ENCODE measurements at regions of chr10 and their contacts with region 1.

Region 1: GRCh38 chr10:77641788-77642397 is 4.3 kb upstream of the KCNMA1 start:
- DNase-seq: no peak
- ATAC-seq: peak; percentile 65

Region 2: DNA sequence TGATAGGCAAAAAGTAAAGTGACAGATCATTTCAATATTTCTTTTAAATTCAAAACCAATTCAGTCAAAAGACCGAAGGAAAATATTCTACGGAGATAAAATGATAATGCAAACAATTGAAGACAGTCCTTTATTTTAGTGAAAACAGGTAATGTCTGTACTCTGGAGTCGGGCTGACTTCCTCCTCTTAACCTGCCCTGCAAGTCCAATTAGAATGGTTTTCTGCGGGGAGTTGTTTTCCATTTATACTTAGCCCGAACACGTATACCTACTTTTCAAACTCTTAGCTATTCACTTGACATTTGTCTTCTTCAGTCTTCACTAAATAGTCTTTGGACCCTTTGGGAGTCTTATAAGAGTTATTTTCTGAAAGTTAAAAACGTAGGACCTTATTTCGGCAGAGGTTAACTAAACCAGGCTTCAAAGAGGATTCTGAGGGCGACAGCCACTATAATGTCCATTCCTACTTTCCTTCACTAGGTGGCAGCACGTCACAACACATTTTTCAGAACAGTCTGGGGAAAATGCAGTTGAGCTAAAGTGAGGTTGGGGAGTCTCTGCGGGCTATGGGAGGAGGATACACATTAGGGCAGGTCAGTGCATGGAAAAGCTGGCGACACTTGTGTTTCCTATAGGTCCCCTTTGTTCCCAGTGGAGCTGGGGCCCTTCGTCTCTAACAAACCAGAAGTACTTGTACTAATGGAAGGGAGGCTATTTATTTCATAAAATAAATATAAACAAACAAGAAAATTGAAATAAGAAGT is 476.3 kb before region 1 on chr10:
- intact Hi-C with region 1: loop called (anchors 2 kb)
- DNase-seq: no peak
- ATAC-seq: peak; percentile 71

Region 3: GRCh38 chr10:77173615-77174461 is 468.1 kb before region 1 on chr10:
- intact Hi-C with region 1: loop called (anchors 2 kb)
- DNase-seq: peak; percentile 63
- ATAC-seq: peak; percentile 83

Region 4: DNA sequence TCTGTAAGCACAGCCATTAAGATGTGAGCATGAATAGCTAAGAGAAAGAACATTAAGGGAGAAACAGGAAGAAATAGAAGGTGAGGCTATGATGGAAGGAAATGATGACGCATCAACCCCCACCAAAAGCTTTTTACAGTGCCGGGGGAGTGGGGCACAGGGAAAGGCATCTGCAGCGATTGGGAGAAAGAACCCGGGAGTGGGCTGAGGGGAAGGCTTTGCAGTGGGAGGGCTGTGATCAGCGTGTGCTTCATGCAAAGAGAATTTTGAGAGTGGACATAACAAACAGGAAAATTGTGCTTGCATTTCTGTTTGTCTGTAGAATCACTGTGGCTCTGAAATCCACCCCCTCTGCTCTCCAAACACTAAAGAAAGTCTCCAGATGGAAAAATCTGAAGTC is 255.1 kb before region 1 on chr10:
- intact Hi-C with region 1: loop called (anchors 5 kb)
- DNase-seq: no peak
- ATAC-seq: no peak

Region 5: GRCh38 chr10:77494327-77494726 is 147.6 kb before region 1 on chr10:
- intact Hi-C with region 1: loop called (anchors 2 kb)
- DNase-seq: no peak
- ATAC-seq: peak; percentile 36

Region 6: DNA sequence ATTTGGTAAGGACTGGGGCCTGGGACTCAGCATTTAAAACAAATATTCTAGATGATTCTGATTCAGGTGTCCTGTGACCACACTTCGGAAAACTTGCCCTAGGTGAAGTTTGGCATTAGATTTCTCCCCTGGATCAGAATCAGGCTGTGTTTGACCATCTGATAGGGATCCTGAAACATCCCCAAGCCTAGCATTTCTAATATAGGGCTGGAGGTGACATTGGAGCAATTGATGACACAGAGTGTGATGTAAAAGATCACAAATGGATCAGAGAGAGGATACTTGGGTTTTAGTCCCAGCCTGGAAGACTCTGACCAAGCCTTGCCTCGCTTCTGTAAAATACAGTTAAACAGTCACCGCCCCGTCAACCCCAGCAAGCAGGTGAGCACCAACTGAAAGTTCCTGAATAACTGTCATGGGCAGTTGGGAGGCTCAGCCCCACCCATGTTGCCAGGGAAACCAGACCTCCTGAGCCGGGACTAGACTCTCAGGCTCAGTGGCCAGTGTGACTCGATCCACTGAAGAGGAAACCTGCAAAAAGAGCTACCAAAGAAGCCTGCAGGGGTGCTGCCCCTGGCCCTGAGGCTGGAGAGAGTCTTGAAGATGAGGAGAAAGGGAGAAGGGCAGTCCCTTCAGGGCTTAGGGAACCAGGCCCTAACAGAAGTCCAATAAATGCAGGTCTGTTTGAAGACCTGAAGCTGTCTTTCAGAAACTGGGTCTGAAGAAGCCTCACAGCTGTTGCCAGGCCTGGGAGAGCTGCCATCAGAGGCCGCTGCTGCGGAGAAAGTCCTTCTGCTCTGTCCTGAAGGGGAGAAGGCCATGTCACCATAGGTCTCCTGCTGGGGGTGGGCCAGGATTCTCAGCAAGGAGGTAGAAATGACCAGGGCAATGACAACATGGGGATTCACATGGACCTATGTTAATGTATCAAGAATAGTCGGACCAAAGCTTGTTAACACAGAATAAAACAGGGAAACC is 121.8 kb after region 1 on chr10:
- intact Hi-C with region 1: no loop called
- DNase-seq: no peak
- ATAC-seq: peak; percentile 61

Measured in Right ventricle myocardium superior (tissue), 1 donor.